Endothelial cell of umbilical vein (primary cell): ENCODE measurements at regions of chr7 and their contacts with region 1.

Region 1: GRCh38 chr7:44072364-44073231 is 7.2 kb upstream of the PGAM2 start:
- DNase-seq: peak; percentile 87
- H3K4me3 ChIP-seq: no peak overlapping the region
- H3K27ac ChIP-seq: peak overlapping the region; percentile 95
- H3K4me1 ChIP-seq: peaks cover 27% of the 10 kb centered on the region
- H3K27me3 ChIP-seq: no peaks in the 10 kb centered on the region
- CTCF ChIP-seq: peak; percentile 84 to 91
- POLR2A ChIP-seq: peak; percentile 54

Region 2: DNA sequence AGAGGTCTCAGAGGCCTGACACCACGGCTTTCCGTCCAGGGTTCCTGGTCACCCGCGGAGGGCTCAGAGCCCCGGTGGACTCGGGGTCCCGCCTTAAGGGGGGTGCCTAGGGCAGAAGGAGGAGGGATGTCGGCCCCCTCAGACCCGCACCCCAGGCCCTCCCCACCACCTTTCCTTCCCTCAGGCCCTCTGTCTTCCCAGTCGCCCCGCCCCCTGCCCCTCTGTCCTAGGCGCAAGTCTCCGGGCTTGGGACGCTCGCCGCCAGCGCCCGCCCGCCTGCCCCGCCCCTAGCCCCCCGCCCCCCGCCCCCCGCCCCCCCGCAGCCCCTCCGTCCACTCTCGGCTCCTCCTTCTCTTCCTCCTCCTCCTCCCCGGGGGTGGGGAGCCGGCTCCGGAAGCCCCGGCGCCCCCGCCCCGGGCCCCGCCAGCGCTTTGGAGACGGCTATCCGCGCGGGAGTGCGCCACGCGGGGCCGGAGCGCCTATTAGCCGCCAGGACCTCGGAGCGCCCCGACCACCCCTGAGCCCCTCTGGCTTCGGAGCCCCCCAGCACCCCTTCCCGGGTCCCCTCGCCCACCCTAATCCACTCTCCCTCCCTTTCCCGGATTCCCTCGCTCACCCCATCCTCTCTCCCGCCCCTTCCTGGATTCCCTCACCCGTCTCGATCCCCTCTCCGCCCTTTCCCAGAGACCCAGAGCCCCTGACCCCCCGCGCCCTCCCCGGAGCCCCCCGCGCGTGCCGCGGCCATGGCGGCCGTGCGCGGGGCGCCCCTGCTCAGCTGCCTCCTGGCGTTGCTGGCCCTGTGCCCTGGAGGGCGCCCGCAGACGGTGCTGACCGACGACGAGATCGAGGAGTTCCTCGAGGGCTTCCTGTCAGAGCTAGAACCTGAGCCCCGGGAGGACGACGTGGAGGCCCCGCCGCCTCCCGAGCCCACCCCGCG is 31.6 kb after region 1 on chr7 and contains the start of gene AEBP1:
- CTCF ChIA-PET with region 1: interaction called, 17 read pairs
- POLR2A ChIA-PET with region 1: no interaction called
- dilution Hi-C with region 1: no loop called
- intact Hi-C with region 1: no loop called
- DNase-seq: peak; percentile 17
- H3K4me3 ChIP-seq: peak within 1 kb of the TSS; percentile 9 to 76 (median 59)
- H3K27ac ChIP-seq: no peak within 1 kb of the TSS
- H3K4me1 ChIP-seq: peaks cover 3% of the 10 kb centered on the region
- H3K27me3 ChIP-seq: no peaks in the 10 kb centered on the region
- CTCF ChIP-seq: no peak
- POLR2A ChIP-seq: no peak
- total RNA-seq, gene AEBP1: 47.7 and 48.0 TPM in 2 replicates

Region 3: DNA sequence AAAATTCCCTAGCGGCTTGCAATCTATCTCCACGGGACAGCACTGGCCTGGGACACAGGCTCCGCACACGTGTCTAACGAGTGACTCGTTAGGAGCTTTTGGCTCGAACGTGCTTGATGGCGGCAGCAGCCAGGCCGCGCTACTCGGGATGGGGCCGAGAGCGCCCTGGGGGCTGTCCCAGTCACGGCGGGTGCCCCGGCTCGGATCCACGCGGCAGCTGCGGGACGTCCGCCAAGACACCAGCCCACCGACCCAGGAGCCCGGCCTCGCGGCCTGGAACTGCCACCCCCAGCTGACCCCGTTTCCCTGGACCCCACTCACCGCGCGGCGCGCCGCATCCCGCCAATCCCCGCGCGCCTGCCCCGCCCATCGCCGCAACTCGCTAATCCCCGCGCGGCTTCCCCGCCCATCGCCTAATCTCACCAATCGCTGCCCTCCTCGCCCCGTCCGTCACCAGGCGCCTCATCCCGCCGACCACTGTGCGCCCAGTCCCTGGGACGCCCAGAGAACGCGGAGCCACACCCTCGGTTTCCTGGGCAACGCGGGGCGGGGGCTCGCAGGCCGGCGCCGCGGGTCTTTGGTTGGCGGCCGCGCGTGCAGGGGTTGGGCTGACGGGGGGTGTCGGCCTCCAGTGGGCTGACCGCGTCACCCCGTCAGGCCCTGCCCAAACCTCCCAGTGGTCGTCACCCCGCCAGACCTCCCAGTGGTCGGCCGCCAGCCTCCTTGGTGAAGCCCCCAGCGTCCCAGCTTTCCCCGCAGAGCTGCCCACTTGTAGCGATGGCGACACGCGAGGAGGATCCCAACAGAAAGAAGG is 50.8 kb after region 1 on chr7 and contains the start of gene POLD2:
- CTCF ChIA-PET with region 1: interaction called, 30 read pairs
- POLR2A ChIA-PET with region 1: no interaction called
- dilution Hi-C with region 1: no loop called
- intact Hi-C with region 1: loop called (anchors 2 kb)
- DNase-seq: peak; percentile 98
- H3K4me3 ChIP-seq: peak within 1 kb of the TSS; percentile 69 to 84 (median 79)
- H3K27ac ChIP-seq: peak within 1 kb of the TSS; percentile 53
- H3K4me1 ChIP-seq: peaks cover 14% of the 10 kb centered on the region
- H3K27me3 ChIP-seq: peaks cover 0 to under 1% of the 10 kb centered on the region in 2 experiments
- CTCF ChIP-seq: no peak
- POLR2A ChIP-seq: peak; percentile 40
- total RNA-seq, gene POLD2: 96.5 and 106 TPM in 2 replicates

Region 4: GRCh38 chr7:44200647-44201461 is 128.3 kb after region 1 on chr7 and contains the start of gene YKT6:
- CTCF ChIA-PET with region 1: interaction called, 60 read pairs
- POLR2A ChIA-PET with region 1: no interaction called
- dilution Hi-C with region 1: no loop called
- intact Hi-C with region 1: loop called (anchors 1 kb)
- DNase-seq: peak; percentile 94
- H3K4me3 ChIP-seq: peak within 1 kb of the TSS; percentile 93 to 100 (median 98)
- H3K27ac ChIP-seq: peak within 1 kb of the TSS; percentile 58
- H3K4me1 ChIP-seq: peaks cover 11% of the 10 kb centered on the region
- H3K27me3 ChIP-seq: peaks cover 3 to 10% of the 10 kb centered on the region in 2 experiments
- CTCF ChIP-seq: peak; percentile 45 to 67
- POLR2A ChIP-seq: peak; percentile 94
- total RNA-seq, gene YKT6: 117 and 120 TPM in 2 replicates

Region 5: GRCh38 chr7:44477063-44477830 is 404.6 kb after region 1 on chr7:
- CTCF ChIA-PET with region 1: no interaction called
- POLR2A ChIA-PET with region 1: no interaction called
- dilution Hi-C with region 1: no loop called
- intact Hi-C with region 1: loop called (anchors 2 kb)
- DNase-seq: peak; percentile 73
- H3K4me3 ChIP-seq: no peak overlapping the region
- H3K27ac ChIP-seq: peak overlapping the region; percentile 31
- H3K4me1 ChIP-seq: peaks cover 29% of the 10 kb centered on the region
- H3K27me3 ChIP-seq: no peaks in the 10 kb centered on the region
- CTCF ChIP-seq: peak; percentile 95 to 99
- POLR2A ChIP-seq: no peak

Region 6: DNA sequence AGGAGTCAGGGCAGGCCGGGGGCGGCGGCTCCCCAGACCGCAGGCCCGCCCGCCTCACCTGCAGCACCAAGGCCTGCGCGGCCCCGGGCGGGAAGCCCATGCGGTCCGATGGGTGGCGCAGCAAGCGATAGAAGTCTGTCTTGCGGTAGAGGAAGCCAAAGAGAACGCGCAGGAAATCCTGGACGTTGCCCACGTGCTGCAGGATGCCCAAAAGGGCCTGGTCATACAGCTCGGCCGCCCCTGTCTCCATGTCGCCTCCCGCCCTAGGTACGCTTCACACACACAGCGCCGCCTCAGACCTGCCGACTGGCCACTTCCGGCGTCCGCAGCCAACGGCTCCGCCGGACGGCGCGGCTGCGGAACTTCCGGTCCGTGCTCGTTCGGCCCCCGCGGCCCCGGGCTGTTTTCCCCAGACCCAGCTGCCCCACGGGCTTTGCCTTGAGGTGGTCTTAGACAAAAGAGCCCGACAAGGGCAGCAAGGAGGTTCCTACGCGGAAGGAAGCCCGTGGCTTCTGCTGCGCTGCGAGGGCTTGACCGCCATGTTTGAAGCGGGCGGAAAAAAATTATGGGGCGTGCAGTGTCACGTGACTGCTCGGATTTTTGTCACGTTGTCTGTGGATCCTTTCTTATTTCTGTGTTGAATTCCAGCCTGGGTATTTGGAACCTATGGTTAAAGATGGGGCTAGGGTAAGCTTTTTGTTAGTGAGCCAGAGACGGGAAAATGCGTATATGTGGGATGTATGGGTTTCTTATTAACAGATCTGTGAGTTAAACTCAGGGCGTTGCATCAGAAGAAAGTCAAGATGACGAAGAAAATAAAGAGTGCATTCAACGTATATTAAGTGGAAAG is 418.0 kb after region 1 on chr7 and contains the start of gene NUDCD3:
- CTCF ChIA-PET with region 1: no interaction called
- POLR2A ChIA-PET with region 1: no interaction called
- dilution Hi-C with region 1: no loop called
- intact Hi-C with region 1: loop called (anchors 5 kb)
- DNase-seq: peak; percentile 87
- H3K4me3 ChIP-seq: peak within 1 kb of the TSS; percentile 65 to 94 (median 65)
- H3K27ac ChIP-seq: peak within 1 kb of the TSS; percentile 91
- H3K4me1 ChIP-seq: peaks cover 38% of the 10 kb centered on the region
- H3K27me3 ChIP-seq: peaks cover 0 to 4% of the 10 kb centered on the region in 2 experiments
- CTCF ChIP-seq: peak; percentile 6 to 26
- POLR2A ChIP-seq: peak; percentile 75
- total RNA-seq, gene NUDCD3: 117 and 137 TPM in 2 replicates